Activated T-helper 2 cell treated with anti-CD3 and anti-CD28 coated beads, Interferon-gamma antibody, Interleukin-2, Interleukin-4, amounts not matched to agents 10 μg/mL and 5 μg/mL and 100 μg/mL, durations not matched to agents 14 hours and 24 hours and 36 hours (primary cell): ENCODE measurements at regions of chr19 and their contacts with region 1.

Region 1: DNA sequence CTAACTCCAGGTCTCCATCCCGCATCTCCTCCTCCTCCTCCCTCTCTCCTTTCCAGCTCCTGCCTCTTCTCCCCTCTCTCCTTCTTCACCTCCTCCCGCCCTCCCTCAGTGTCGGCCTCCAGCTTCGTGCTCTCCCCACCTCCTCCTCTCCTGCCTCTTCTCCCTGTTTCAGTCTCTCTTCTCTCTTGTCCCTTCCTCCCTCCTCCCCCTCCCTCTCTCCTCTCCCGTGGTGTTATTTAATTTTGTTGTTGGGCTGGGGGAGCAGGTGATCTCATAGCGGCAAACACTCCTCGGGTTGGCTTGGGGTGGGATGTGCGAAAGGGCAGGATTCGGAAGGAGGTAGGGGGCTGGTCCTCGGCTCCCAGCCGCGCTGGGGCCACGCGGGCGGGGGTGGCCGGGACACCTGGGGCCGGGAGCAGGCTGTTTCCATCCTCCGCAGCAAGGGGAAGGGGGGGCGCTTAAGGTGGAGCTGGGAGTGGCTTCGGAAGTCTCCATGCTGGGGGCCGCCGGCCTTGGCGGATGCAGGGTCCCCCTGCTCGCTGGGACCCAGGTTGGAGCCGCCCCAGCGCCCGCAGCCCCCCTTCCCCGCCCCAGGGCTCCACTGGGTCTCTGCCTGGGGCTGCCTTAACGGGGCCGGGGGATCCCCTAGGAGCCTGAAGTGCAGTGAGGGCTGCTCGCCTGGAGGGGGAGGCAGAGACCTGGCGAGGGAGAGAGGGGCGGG is at the start of gene CA11:
- DNase-seq: peak; percentile 88
- H3K4me3 Mint-ChIP-seq: peak within 1 kb of the TSS; percentile 75
- H3K27ac Mint-ChIP-seq: peak within 1 kb of the TSS; percentile 81
- H3K4me1 Mint-ChIP-seq: peaks cover 31% of the 10 kb centered on the region
- H3K27me3 Mint-ChIP-seq: peaks cover 4% of the 10 kb centered on the region
- total RNA-seq, gene CA11: 5.4 and 6.5 TPM in 2 replicates

Region 2: GRCh38 chr19:48660854-48661731 is 14.9 kb after region 1 on chr19:
- intact Hi-C with region 1: loop called (anchors 2 kb)
- DNase-seq: peak; percentile 80
- H3K4me3 Mint-ChIP-seq: peak overlapping the region; percentile 40
- H3K27ac Mint-ChIP-seq: peak overlapping the region; percentile 91
- H3K4me1 Mint-ChIP-seq: peaks cover 6% of the 10 kb centered on the region
- H3K27me3 Mint-ChIP-seq: peaks cover 3% of the 10 kb centered on the region

Region 3: DNA sequence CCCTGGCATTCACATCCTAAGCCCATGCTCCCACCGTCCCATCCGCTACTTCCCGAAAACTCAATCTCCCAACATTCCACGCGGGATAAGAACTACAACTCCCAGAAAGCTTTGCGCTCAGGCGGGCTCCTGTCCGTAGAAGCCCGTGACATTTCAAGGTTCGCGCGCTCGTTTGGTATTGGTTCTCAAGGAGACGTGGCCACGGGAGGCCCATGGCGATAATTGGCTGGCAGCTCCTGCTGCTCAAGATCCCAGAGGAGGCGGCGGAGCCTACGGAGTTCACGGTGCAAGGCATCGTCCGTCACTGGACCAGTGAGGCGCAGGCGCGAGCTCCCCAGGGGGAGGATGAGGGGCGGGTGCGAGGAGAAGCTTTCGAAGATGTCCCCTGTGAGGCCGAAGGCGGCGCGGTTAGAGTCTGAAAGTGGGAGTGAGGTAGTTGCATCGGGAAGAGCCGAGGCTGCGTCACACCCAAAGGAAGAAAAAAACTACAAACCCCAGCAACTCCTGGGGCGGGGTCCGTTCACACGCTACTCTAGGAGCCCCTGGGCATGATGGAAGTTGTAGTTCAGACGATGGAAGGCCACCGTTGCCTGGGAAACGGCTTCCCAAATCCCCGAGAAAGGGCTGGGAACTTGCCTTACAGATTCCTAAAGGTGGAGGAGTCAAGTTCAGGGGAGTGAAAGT is 74.6 kb after region 1 on chr19:
- intact Hi-C with region 1: loop called (anchors 5 kb)
- DNase-seq: peak; percentile 90
- H3K4me3 Mint-ChIP-seq: peak overlapping the region; percentile 91
- H3K27ac Mint-ChIP-seq: peak overlapping the region; percentile 98
- H3K4me1 Mint-ChIP-seq: peaks cover 14% of the 10 kb centered on the region
- H3K27me3 Mint-ChIP-seq: no peaks in the 10 kb centered on the region

Region 4: DNA sequence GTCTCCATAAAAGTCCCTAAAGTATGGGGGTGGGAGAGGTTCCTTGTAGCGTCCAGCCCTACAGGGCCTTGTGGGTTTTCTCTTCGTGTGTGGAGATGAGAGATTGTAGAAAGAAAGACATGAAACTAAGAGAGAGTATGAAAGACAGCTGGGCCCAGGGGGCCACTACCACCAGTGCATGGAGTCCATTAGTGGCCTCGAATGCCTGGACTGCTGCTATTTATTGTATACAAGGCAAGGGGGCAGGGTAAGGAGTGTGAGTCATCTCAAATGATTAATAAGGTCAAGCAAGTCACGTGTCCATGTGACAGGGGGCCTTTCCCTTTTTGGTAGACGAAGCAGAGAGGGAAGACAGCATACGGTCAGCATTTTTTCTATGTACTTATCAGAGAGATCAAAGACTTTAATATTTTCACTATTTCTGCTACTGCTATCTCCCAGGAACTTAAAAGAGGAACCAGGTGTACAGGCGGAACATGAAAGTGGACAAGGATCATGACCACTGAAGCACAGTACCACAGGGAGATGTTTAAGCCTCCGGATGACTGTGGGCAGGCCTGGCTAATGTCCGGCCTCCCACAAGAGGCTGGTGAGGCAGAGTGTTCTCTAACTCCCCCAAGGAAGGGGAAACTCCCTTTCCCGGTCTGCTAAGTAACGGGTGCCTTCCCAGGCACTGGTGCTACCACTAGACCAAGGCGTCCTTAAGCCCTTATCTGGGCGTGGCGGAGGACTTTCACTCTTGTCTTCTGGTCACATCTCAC is 134.7 kb after region 1 on chr19:
- intact Hi-C with region 1: loop called (anchors 5 kb)
- DNase-seq: no peak
- H3K4me3 Mint-ChIP-seq: no peak overlapping the region
- H3K27ac Mint-ChIP-seq: no peak overlapping the region
- H3K4me1 Mint-ChIP-seq: peaks cover 1% of the 10 kb centered on the region
- H3K27me3 Mint-ChIP-seq: peaks cover 3% of the 10 kb centered on the region

Region 5: GRCh38 chr19:48812094-48812929 is 166.2 kb after region 1 on chr19:
- intact Hi-C with region 1: loop called (anchors 1 kb)
- DNase-seq: peak; percentile 58
- H3K4me3 Mint-ChIP-seq: peak overlapping the region; percentile 79
- H3K27ac Mint-ChIP-seq: peak overlapping the region; percentile 49
- H3K4me1 Mint-ChIP-seq: peaks cover 32% of the 10 kb centered on the region
- H3K27me3 Mint-ChIP-seq: no peaks in the 10 kb centered on the region

Region 6: DNA sequence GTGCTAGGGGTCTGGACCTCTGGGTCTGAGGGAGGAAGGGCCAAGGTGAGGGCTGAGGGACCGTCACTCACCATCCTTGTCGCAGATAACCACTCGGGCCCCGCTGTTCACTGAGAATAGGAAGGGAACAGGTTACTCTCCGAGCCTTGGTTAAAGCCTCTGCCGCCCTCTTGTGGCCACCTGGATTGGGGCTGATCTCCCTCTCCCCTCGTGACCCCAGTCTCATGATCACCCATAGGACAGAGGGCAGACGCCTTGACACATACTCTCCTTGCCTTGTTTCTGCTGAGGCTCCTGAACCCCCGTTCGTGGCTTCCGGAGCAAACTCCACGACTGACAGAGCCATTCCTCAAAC is 189.6 kb after region 1 on chr19:
- intact Hi-C with region 1: loop called (anchors 2 kb)
- DNase-seq: peak; percentile 85
- H3K4me3 Mint-ChIP-seq: peak overlapping the region; percentile 83
- H3K27ac Mint-ChIP-seq: peak overlapping the region; percentile 76
- H3K4me1 Mint-ChIP-seq: peaks cover 15% of the 10 kb centered on the region
- H3K27me3 Mint-ChIP-seq: peaks cover 2% of the 10 kb centered on the region

Region 7: DNA sequence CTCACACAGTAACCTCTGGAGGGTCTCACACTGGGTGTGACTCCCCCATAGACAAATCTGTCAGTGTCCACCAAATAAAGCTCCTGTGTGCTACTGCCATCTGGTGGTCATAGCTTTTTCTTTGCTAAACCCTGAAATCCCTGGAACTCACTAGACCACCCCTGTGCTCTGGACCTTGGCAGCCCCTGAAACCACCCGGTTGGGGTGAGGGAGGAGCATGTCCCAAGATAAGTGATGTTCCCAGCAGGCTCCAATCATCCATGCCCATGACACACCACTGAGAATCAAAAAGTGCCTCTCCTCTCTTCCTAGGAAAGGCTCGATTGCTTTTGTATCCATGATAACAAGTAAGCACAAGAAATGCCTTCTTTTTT is 196.6 kb after region 1 on chr19:
- intact Hi-C with region 1: loop called (anchors 2 kb)
- DNase-seq: peak; percentile 24
- H3K4me3 Mint-ChIP-seq: no peak overlapping the region
- H3K27ac Mint-ChIP-seq: no peak overlapping the region
- H3K4me1 Mint-ChIP-seq: no peaks in the 10 kb centered on the region
- H3K27me3 Mint-ChIP-seq: peaks cover under 1% of the 10 kb centered on the region